H1 (cell line): ENCODE measurements at regions of chr4 and their contacts with region 1.

Region 1: DNA sequence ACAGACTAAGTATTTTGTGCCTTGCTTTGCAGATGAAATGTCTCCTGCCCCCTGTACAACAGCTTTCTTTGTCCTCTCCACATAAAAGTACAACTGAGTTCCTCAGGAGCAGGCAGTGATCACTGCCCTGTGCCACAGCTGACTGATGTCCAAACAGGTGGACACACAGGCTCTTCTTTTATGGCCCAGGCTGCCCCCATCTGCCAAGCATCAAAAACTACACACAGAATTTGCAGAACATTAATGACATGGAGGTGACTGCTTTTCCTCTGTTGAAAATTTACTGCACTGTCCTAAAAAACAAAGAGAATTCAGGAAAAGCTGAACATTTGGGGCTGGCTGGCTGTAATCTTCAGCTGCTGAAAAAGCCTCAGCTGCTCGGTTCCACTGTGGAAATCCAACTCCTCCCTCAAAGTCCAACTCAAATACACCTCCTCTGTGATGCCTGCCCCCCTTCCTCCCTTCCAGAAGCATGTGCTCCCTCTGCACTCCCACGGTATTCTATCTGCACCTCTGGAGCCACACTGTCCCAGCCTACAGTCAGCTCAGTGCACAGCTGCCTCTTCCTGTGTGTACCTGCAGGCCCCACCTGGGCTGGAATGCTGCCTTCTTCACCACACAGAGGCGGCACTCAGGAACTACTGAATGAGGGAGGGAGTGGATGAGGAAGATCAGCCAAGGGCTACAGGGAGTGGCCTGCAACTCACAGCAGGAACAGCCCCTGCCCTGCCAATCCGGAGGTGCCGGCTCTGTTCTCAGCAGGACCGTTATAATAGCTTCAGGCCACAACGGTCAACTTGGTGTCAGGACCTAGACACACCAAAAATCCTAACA is 10.3 kb downstream of the AFAP1 start:
- DNase-seq: peak in 1 of 2 experiments; percentile 25
- H3K4me3 ChIP-seq: no peak overlapping the region
- H3K27ac ChIP-seq: no peak overlapping the region
- H3K4me1 ChIP-seq: peaks cover 6 to 12% (median 10%) of the 10 kb centered on the region in 4 experiments; a peak in 6 of 7 replicates
- H3K27me3 ChIP-seq: no peaks in the 10 kb centered on the region
- CTCF ChIP-seq: peak in 2 of 3 experiments; percentile 30 to 39; a peak in 2 of 4 replicates
- EP300 ChIP-seq: peak in 1 of 2 experiments; percentile 36; a peak in 1 of 3 replicates
- POLR2A ChIP-seq: no peak
- RAD21 ChIP-seq: peak; percentile 53 to 65

Region 2: GRCh38 chr4:7917662-7918061 is 11.7 kb before region 1 on chr4:
- CTCF ChIA-PET with region 1: interaction called, 11 read pairs
- POLR2A ChIA-PET with region 1: interaction called, 6 read pairs
- DNase-seq: no peak
- H3K4me3 ChIP-seq: no peak overlapping the region
- H3K27ac ChIP-seq: no peak overlapping the region
- H3K4me1 ChIP-seq: peaks cover 0 to 8% (median 1%) of the 10 kb centered on the region in 4 experiments; a peak in 5 of 7 replicates
- H3K27me3 ChIP-seq: no peaks in the 10 kb centered on the region
- CTCF ChIP-seq: peak; percentile 12 to 31 (median 13); a peak in 3 of 4 replicates
- EP300 ChIP-seq: no peak
- POLR2A ChIP-seq: no peak
- RAD21 ChIP-seq: no peak; a peak in 1 of 4 replicates

Region 3: GRCh38 chr4:7939377-7940108 is 10.2 kb after region 1 on chr4 and contains the start of gene AFAP1:
- CTCF ChIA-PET with region 1: interaction called, 5 read pairs
- POLR2A ChIA-PET with region 1: interaction called, 10 read pairs
- DNase-seq: peak in 1 of 2 experiments; percentile 97
- H3K4me3 ChIP-seq: peak within 1 kb of the TSS; percentile 36 to 85 (median 54)
- H3K27ac ChIP-seq: no peak within 1 kb of the TSS
- H3K4me1 ChIP-seq: peaks cover 8 to 24% (median 12%) of the 10 kb centered on the region in 4 experiments; a peak in 6 of 7 replicates
- H3K27me3 ChIP-seq: no peaks in the 10 kb centered on the region
- CTCF ChIP-seq: no peak
- EP300 ChIP-seq: no peak
- POLR2A ChIP-seq: 0 out of 3 replicates have a peak, but pooled peaks of 1 of the 2 experiments have one; percentile 26
- RAD21 ChIP-seq: peak in 1 of 2 experiments; percentile 23; a peak in 1 of 4 replicates
- total RNA-seq, gene AFAP1: 16.2 and 18.2 TPM in 2 replicates

Region 4: GRCh38 chr4:8000721-8001491 is 71.6 kb after region 1 on chr4:
- CTCF ChIA-PET with region 1: no interaction called
- POLR2A ChIA-PET with region 1: no interaction called
- DNase-seq: no peak
- H3K4me3 ChIP-seq: no peak overlapping the region
- H3K27ac ChIP-seq: no peak overlapping the region
- H3K4me1 ChIP-seq: peaks cover 0 to 4% (median 2%) of the 10 kb centered on the region in 4 experiments; a peak in 3 of 7 replicates
- H3K27me3 ChIP-seq: no peaks in the 10 kb centered on the region
- CTCF ChIP-seq: no peak
- EP300 ChIP-seq: no peak
- POLR2A ChIP-seq: no peak
- RAD21 ChIP-seq: no peak